ENCODE measurements at regions of chr7 and their contacts with region 1.

Region 1: DNA sequence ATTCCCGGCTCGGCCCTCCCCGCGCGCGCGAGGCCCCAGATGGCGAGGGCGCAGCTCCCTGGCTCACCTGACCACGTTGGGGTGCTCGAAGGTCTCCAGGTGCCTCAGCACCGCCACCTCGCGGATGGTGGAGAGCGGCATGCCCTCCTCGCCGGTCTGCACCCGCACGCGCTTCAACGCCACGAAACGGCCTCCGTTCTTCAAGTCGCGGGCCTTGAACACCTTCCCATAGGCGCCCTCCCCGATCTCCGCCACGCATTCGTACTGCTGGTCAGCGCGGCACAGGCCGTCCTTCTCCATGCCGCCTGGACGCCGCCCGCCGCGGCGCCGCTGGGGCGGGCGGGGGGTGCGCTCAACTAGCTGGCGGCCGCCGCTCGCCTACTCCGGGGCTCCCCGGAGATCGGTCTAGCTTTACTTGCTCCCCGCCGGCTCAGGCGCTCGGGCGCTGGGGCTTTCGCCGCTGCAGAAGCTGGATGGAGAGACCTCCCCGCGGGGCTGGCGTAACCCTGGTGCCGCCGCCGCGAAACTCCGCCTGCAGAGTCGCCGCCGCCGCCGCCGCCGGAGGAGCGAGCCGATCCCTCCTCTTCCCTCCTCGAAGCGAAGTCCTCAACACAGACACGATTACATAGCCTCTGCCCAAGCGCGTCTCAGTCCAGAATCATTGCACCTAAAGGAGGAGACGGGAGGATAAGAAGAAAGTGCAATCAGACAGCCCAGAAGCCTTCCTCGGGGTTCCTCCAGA is 3.2 kb downstream of the CDK6 start:
- DNase-seq: peak; percentile 90 to 94 (median 92)
- ATAC-seq: peak; percentile 75 to 90 (median 81)
- H3K4me3 ChIP-seq: peak overlapping the region; percentile 74 to 86 (median 80)
- H3K27ac ChIP-seq: peak overlapping the region; percentile 74 to 87 (median 83)
- H3K4me1 ChIP-seq: peaks cover 0 to 17% (median 0%) of the 10 kb centered on the region in 4 donors
- H3K27me3 ChIP-seq: no peaks in the 10 kb centered on the region
- CTCF ChIP-seq: peak; percentile 88 to 92 (median 90)
- POLR2A ChIP-seq: no peak

Region 2: GRCh38 chr7:92621026-92621540 is 212.1 kb before region 1 on chr7:
- intact Hi-C with region 1: loop called in 1 of 2 experiments (anchors 10 kb)
- DNase-seq: peak in 2 of 3 donors; percentile 49 to 65
- ATAC-seq: peak; percentile 94 to 98 (median 97)
- H3K4me3 ChIP-seq: no peak overlapping the region
- H3K27ac ChIP-seq: no peak overlapping the region
- H3K4me1 ChIP-seq: peaks cover 0 to 3% (median 0%) of the 10 kb centered on the region in 4 donors
- H3K27me3 ChIP-seq: no peaks in the 10 kb centered on the region
- CTCF ChIP-seq: peak; percentile 68 to 95 (median 81)
- POLR2A ChIP-seq: no peak

Region 3: DNA sequence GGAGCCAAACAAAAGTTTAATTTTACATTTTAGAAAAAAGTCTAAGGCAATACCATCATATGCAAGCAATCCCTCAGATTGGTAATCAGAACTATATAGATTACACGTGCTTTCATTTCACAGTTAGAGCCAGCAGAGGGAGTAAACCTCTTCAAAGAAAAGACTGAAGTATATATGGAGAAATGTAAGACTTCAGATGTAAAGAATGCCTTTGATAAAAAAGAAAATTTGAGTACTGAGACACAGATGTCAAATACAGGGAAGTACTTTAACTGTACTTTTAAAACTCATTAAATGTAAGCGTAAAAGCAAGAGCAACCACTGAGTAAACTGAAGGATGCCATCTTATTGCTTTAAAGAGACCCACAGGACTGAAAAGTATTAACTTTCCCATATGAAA is 141.6 kb before region 1 on chr7:
- intact Hi-C with region 1: loop called in 1 of 2 experiments (anchors 10 kb)
- DNase-seq: no peak
- ATAC-seq: peak; percentile 19 to 51 (median 44)
- H3K4me3 ChIP-seq: no peak overlapping the region
- H3K27ac ChIP-seq: no peak overlapping the region
- H3K4me1 ChIP-seq: peaks cover 0 to 22% (median 7%) of the 10 kb centered on the region in 4 donors
- H3K27me3 ChIP-seq: no peaks in the 10 kb centered on the region
- CTCF ChIP-seq: peak; percentile 54 to 70 (median 59)
- POLR2A ChIP-seq: no peak

Region 4: GRCh38 chr7:92997152-92997551 is 164.0 kb after region 1 on chr7:
- intact Hi-C with region 1: no loop called
- DNase-seq: no peak
- ATAC-seq: no peak
- H3K4me3 ChIP-seq: no peak overlapping the region
- H3K27ac ChIP-seq: no peak overlapping the region
- H3K4me1 ChIP-seq: no peaks in the 10 kb centered on the region
- H3K27me3 ChIP-seq: no peaks in the 10 kb centered on the region
- CTCF ChIP-seq: no peak
- POLR2A ChIP-seq: no peak